ENCODE measurements at regions of chr7 and their contacts with region 1.

Region 1: GRCh38 chr7:26151953-26152781 is at the start of gene NFE2L3:
- DNase-seq: no peak
- H3K4me3 ChIP-seq: peak within 1 kb of the TSS; percentile 69
- H3K27ac ChIP-seq: no peak within 1 kb of the TSS
- H3K27me3 ChIP-seq: no peaks in the 10 kb centered on the region
- CTCF ChIP-seq: no peak
- polyA plus RNA-seq, gene NFE2L3: 50.2 and 63.5 TPM in 2 replicates

Region 2: DNA sequence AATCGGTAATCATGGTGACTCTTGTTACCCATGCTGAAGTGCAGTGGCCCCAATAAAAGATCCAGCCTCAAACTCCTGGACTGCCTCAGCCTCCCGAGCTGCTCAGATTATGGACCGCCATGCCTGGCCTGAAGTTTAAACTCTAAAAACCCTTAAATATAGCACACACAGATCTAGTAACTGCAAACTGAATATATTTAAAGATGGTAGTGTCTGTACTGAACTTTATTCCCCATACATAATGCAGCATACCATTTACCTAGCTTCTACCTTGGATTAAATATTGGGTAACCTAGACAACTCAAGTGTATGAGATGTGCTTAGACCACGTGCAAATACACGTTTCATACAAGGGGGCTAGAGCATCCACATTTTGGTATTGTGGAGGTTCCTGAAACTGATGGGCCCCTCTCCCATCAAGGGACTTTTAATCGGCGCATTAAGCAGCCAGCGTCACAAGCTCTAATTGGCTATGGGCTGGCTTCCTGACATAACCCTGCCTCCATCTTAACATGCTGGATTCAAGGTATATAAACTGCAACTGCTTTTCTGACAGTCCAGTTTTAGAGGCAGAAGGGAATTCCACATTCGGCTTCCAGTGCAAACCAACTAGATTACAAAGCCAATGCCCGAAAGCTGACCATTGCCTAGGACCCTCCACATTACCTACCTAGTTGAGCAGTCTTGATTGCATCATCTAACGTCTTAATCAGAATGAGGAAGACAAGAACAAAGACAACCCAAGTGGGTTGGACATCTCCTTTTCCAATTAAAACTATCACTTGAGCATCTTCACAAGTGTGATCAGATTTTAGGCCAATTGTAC is 35.4 kb after region 1 on chr7:
- CTCF ChIA-PET with region 1: interaction called, 4 read pairs
- POLR2A ChIA-PET with region 1: interaction called, 10 read pairs
- DNase-seq: no peak
- H3K4me3 ChIP-seq: no peak overlapping the region
- H3K27ac ChIP-seq: no peak overlapping the region
- H3K27me3 ChIP-seq: no peaks in the 10 kb centered on the region
- CTCF ChIP-seq: no peak

Measured in AG04450 (cell line).